MCF 10A (cell line): ENCODE measurements at regions of chr16 and their contacts with region 1.

Region 1: GRCh38 chr16:49350265-49351095 is 23.1 kb upstream of the C16orf78 start:
- DNase-seq: peak; percentile 47
- H3K4me3 Mint-ChIP-seq: no peak overlapping the region
- H3K27ac Mint-ChIP-seq: no peak overlapping the region
- H3K4me1 Mint-ChIP-seq: no peaks in the 10 kb centered on the region
- H3K27me3 Mint-ChIP-seq: peaks cover 30% of the 10 kb centered on the region
- CTCF ChIP-seq: peak; percentile 90

Region 2: GRCh38 chr16:48378836-48379235 is 971.6 kb before region 1 on chr16:
- CTCF ChIA-PET with region 1: no interaction called
- POLR2A ChIA-PET with region 1: no interaction called
- intact Hi-C with region 1: no loop called
- DNase-seq: no peak
- H3K4me3 Mint-ChIP-seq: no peak overlapping the region
- H3K27ac Mint-ChIP-seq: peak overlapping the region; percentile 49
- H3K4me1 Mint-ChIP-seq: peaks cover 45% of the 10 kb centered on the region
- H3K27me3 Mint-ChIP-seq: no peaks in the 10 kb centered on the region
- CTCF ChIP-seq: no peak

Region 3: DNA sequence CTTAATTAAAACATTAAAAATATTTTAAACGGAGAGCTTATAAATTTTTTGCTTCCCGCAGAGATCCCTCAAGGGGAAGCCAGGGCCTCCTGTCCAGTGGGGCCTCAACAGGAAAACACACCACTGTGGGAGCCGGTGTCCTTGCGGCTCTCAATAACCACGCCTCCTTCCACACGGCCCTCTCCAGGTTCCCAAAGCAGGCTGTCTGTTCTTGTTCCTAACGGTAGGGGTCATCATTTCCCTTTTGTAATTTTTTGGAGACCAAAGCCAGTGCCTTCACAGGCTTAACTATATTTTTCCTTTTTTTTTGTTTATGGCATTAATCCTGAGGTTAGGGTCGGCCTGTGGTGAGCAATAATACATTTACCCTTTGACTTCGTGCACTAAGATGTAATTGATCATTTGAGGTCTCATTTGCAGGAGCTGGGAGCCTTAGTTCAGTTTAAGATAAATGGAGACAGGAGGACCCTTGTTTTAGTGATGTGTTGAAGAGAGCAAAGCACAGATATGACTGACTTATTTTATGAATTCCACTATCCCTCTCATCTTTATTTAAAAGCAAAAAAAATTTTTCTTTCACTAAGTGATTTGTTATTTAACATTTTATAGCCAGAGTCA is 663.0 kb before region 1 on chr16:
- CTCF ChIA-PET with region 1: interaction called, 120 read pairs
- POLR2A ChIA-PET with region 1: interaction called, 3 read pairs
- intact Hi-C with region 1: loop called (anchors 1 kb)
- DNase-seq: peak; percentile 78
- H3K4me3 Mint-ChIP-seq: no peak overlapping the region
- H3K27ac Mint-ChIP-seq: no peak overlapping the region
- H3K4me1 Mint-ChIP-seq: no peaks in the 10 kb centered on the region
- H3K27me3 Mint-ChIP-seq: peaks cover 73% of the 10 kb centered on the region
- CTCF ChIP-seq: peak; percentile 80

Region 4: DNA sequence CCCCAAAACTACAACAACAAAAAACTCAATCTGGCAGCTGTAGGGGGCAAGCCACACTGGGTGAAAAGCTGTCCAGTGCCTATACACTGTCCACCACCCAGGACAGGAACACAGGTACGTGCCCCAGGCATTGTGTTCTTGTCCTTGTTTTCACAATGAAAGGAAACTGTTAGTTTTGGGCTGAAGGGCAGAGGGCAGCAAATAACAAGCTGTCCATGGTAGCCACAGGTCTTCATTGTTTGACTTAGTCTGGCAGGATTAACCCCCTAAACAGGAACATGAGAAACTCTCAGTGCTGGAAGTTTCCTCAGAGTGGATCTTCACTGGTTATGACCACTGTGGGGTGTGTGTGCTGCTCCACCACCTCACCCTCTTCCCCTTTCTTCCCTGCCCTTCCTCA is 515.9 kb before region 1 on chr16:
- CTCF ChIA-PET with region 1: interaction called, 3 read pairs
- POLR2A ChIA-PET with region 1: no interaction called
- intact Hi-C with region 1: loop called (anchors 1 kb)
- DNase-seq: no peak
- H3K4me3 Mint-ChIP-seq: no peak overlapping the region
- H3K27ac Mint-ChIP-seq: no peak overlapping the region
- H3K4me1 Mint-ChIP-seq: no peaks in the 10 kb centered on the region
- H3K27me3 Mint-ChIP-seq: peaks cover 16% of the 10 kb centered on the region
- CTCF ChIP-seq: no peak

Region 5: GRCh38 chr16:48862087-48862532 is 488.4 kb before region 1 on chr16:
- CTCF ChIA-PET with region 1: interaction called, 7 read pairs
- POLR2A ChIA-PET with region 1: interaction called, 3 read pairs
- intact Hi-C with region 1: loop called (anchors 1 kb)
- DNase-seq: peak; percentile 81
- H3K4me3 Mint-ChIP-seq: no peak overlapping the region
- H3K27ac Mint-ChIP-seq: peak overlapping the region; percentile 60
- H3K4me1 Mint-ChIP-seq: peaks cover 6% of the 10 kb centered on the region
- H3K27me3 Mint-ChIP-seq: peaks cover 9% of the 10 kb centered on the region
- CTCF ChIP-seq: peak; percentile 38

Region 6: DNA sequence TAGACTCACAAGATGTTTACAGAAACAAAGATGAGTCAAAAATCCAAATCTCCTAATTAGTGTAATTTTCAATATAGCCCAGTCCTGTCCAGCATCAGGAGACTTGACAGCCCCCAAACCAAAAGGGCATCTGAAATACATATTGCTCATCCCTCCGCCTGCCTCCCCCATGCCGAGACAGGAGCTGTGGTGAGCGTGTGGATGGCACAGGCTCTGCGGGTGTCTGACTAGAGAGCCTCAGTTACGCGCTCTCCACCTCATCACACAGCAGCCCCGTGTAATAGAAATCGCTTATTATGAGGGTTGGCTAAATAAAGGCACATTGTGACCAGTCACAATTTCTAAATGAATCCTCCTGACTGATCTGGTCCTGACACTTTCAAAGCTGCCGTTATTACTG is 25.8 kb before region 1 on chr16:
- CTCF ChIA-PET with region 1: interaction called, 11 read pairs
- POLR2A ChIA-PET with region 1: no interaction called
- intact Hi-C with region 1: no loop called
- DNase-seq: no peak
- H3K4me3 Mint-ChIP-seq: no peak overlapping the region
- H3K27ac Mint-ChIP-seq: no peak overlapping the region
- H3K4me1 Mint-ChIP-seq: no peaks in the 10 kb centered on the region
- H3K27me3 Mint-ChIP-seq: peaks cover 11% of the 10 kb centered on the region
- CTCF ChIP-seq: no peak

Region 7: GRCh38 chr16:49330562-49331201 is 19.8 kb before region 1 on chr16:
- CTCF ChIA-PET with region 1: interaction called, 52 read pairs
- POLR2A ChIA-PET with region 1: no interaction called
- intact Hi-C with region 1: no loop called
- DNase-seq: no peak
- H3K4me3 Mint-ChIP-seq: no peak overlapping the region
- H3K27ac Mint-ChIP-seq: no peak overlapping the region
- H3K4me1 Mint-ChIP-seq: no peaks in the 10 kb centered on the region
- H3K27me3 Mint-ChIP-seq: peaks cover 20% of the 10 kb centered on the region
- CTCF ChIP-seq: no peak

Region 8: DNA sequence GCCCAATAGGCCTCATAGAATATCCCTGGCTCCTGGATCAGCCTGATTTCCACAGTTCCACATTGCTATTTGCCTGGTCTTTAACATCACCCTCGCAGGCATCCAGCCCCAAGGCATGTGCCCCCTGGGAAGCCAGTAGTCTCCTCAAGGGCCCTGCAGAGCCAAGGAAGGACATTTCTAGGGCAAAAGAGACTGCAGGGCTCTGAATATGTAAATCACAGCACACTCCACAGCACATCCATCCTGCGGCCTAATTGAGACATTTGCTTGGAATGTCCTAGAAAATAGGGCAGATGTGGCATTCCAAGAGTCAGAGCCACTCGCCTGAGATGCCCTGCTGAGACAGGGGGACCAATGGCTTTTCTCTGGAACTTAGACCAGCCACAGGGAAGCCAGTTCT is 11.8 kb after region 1 on chr16:
- CTCF ChIA-PET with region 1: interaction called, 10 read pairs
- POLR2A ChIA-PET with region 1: no interaction called
- intact Hi-C with region 1: no loop called
- DNase-seq: no peak
- H3K4me3 Mint-ChIP-seq: no peak overlapping the region
- H3K27ac Mint-ChIP-seq: no peak overlapping the region
- H3K4me1 Mint-ChIP-seq: no peaks in the 10 kb centered on the region
- H3K27me3 Mint-ChIP-seq: peaks cover 27% of the 10 kb centered on the region
- CTCF ChIP-seq: no peak